HEK293 (cell line): ENCODE measurements at regions of chr3 and their contacts with region 1.

Region 1: DNA sequence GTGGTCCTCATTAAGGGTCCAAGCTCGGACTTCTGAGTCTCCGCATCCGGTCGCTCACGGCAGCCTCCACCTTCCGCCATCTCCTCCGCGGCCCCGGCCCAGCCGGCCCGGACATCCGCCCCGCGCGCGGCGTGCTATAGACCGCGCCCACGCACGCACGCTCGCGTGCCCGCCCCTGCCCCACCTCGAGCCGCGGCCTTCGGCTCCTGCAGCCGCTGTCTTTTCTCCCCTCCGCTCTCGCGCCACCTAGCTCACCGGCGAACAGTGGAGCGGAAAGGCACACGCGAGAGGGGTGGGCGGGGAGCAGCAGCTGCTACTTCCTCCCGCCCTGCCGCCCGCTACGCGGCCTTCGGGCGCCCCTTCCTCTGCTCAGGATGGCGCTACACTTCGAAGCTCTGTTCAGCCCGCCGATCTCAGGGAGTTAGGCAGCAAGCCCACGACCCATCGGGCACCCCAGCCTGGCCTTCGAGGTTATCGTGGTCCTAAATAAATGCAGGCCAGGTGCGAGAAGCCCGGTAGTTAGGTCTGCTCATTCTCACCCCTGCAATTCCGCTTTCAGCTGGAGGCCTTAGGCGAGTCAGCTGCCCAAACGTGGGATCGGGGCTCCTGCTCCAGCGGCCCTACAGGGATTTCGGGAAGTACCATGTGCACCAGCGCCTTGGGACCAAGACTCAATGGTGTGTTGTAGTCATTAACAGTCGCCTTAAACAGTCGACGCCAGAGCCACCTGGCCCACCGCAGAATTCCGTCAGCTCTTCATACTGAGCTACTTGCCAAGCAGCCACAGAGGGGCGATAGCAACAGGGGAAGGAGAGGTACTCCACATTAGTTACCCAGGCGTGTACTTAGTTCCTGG is at the start of gene USP4:
- H3K4me3 ChIP-seq: peak within 1 kb of the TSS; percentile 79
- H3K27ac ChIP-seq: peak within 1 kb of the TSS; percentile 88
- H3K4me1 ChIP-seq: no peaks in the 10 kb centered on the region
- CTCF ChIP-seq: peak; percentile 78

Region 2: DNA sequence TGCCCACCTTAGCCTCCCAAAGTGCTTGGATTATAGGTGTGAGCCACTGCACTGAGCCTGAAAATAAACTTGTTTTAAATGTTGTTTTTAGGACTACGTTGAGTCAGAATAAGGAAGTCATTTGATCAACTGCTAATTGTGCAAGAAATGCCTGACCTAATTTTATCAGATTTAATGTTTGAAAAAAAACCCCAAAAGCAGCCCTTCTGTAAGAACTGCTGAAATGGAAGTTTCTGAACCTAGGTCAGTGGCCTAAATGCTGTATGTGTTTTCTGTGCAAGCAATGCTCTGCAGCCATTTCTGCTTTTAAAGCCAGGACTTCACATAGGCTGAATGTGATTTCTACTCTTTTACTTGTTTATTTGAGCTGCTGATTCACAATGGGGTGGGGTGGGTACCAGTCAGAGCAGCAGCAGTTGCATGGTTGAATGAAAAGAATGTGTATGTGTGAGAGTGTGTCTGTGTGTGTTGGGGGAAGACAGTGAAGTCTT is 11.4 kb after region 1 on chr3:
- CTCF ChIA-PET with region 1: interaction called, 3 read pairs
- POLR2A ChIA-PET with region 1: interaction called, 15 read pairs
- H3K4me3 ChIP-seq: no peak overlapping the region
- H3K27ac ChIP-seq: no peak overlapping the region
- H3K4me1 ChIP-seq: no peaks in the 10 kb centered on the region
- CTCF ChIP-seq: no peak

Region 3: GRCh38 chr3:49358217-49358883 is 18.2 kb after region 1 on chr3 and contains the start of gene GPX1:
- CTCF ChIA-PET with region 1: interaction called, 5 read pairs
- POLR2A ChIA-PET with region 1: interaction called, 30 read pairs
- H3K4me3 ChIP-seq: peak within 1 kb of the TSS; percentile 68
- H3K27ac ChIP-seq: peak within 1 kb of the TSS; percentile 91
- H3K4me1 ChIP-seq: peaks cover 7% of the 10 kb centered on the region
- CTCF ChIP-seq: 0 out of 2 replicates have a peak, but pooled peaks have one; percentile 6